Left cardiac atrium (tissue), 4 donors: ENCODE measurements at regions of chr18 and their contacts with region 1.

Region 1: DNA sequence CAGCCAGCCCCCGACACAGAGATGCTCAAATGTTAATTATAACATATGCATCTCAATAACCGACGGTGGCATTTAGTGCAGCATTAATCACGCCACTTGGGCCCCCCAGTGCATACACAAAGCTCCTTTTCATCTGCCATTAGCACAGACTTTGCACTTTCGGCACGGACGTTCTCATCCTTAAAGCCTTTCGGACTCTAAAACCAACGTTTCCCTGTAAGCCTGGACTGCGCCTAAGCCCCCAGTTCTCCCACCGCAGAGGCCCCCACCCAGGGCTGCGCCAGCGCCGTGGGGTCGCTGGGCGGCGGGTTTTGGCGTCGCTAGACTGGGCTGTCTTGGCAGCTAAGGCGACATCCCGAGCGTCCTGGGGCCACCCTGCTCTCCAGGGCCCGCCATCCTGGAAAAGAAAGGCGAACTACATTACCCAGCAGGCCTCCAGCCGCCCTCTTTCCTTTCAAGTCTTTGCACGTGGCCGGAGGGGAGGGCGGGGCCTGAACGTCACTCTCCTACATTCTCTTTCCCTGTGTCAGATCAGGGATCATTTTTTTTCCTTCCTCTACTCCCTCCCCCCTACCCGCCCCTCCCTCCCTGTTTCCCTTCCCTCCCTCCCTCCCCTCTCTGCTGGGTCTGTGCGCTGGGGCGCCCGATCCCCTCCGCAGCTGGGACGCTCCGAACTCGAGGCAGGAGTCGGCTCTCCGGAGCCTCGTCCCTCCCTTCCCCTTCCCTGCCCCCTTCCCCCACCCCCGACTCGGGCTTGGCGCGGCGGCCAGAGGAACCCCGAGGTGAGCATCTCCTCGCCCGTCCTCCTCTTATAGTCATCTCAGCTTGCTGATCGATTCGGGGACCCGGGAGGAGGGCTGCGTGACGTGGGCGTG is at the start of gene CTIF:
- DNase-seq: peak; percentile 97
- ATAC-seq: peak; percentile 86 to 90
- total RNA-seq, gene CTIF: 64.9 to 70.6 TPM

Region 2: GRCh38 chr18:48488388-48488850 is 50.3 kb before region 1 on chr18:
- intact Hi-C with region 1: loop called (anchors 5 to 10 kb)
- DNase-seq: peak; percentile 91
- ATAC-seq: peak; percentile 93 to 94

Region 3: GRCh38 chr18:48605408-48605845 is 66.7 kb after region 1 on chr18:
- intact Hi-C with region 1: loop called (anchors 5 to 10 kb)
- DNase-seq: no peak
- ATAC-seq: no peak